Activated B cell treated with CpG ODN at 0.5 μM for 24 hours (primary cell): ENCODE measurements at regions of chr16 and their contacts with region 1.

Region 1: GRCh38 chr16:69186642-69187445 is at the start of gene SNTB2:
- DNase-seq: peak; percentile 86
- ATAC-seq: peak; percentile 81
- H3K4me3 Mint-ChIP-seq: peak within 1 kb of the TSS; percentile 98
- H3K27ac Mint-ChIP-seq: peak within 1 kb of the TSS; percentile 99
- H3K4me1 Mint-ChIP-seq: peaks cover 35% of the 10 kb centered on the region
- H3K27me3 Mint-ChIP-seq: no peaks in the 10 kb centered on the region
- CTCF ChIP-seq: no peak
- total RNA-seq, gene SNTB2: 7.7 and 9.9 TPM in 2 replicates

Region 2: GRCh38 chr16:68289621-68290329 is 897.1 kb before region 1 on chr16:
- CTCF ChIA-PET with region 1: no interaction called
- POLR2A ChIA-PET with region 1: no interaction called
- intact Hi-C with region 1: loop called (anchors 5 kb)
- DNase-seq: peak; percentile 67
- ATAC-seq: peak; percentile 89
- H3K4me3 Mint-ChIP-seq: peak overlapping the region; percentile 62
- H3K27ac Mint-ChIP-seq: peak overlapping the region; percentile 90
- H3K4me1 Mint-ChIP-seq: peaks cover 70% of the 10 kb centered on the region
- H3K27me3 Mint-ChIP-seq: no peaks in the 10 kb centered on the region
- CTCF ChIP-seq: no peak

Region 3: DNA sequence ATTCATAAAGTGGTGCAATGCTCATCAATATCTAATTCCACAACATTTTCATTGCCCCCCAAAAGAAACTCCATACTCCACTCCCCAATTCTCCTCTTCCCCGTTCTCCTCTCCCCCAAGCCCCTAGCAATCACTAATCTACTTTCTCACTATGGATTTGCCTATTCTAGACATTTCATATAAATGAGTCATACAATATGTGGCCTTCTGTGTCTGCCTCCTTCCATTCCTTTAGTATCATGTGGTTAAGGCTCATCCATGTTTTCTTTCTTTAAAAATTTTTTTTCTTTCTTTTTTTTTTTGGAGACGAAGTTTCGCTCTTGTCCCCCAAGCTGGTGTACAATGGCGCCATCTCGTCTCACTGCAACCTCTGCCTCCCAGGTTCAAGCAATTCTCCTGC is 137.7 kb before region 1 on chr16:
- CTCF ChIA-PET with region 1: no interaction called
- POLR2A ChIA-PET with region 1: no interaction called
- intact Hi-C with region 1: no loop called
- DNase-seq: no peak
- ATAC-seq: no peak
- H3K4me3 Mint-ChIP-seq: no peak overlapping the region
- H3K27ac Mint-ChIP-seq: no peak overlapping the region
- H3K4me1 Mint-ChIP-seq: no peaks in the 10 kb centered on the region
- H3K27me3 Mint-ChIP-seq: no peaks in the 10 kb centered on the region
- CTCF ChIP-seq: no peak

Region 4: GRCh38 chr16:69105489-69106361 is 81.1 kb before region 1 on chr16 and contains the start of gene HAS3:
- CTCF ChIA-PET with region 1: no interaction called
- POLR2A ChIA-PET with region 1: no interaction called
- intact Hi-C with region 1: no loop called
- DNase-seq: peak; percentile 38
- ATAC-seq: peak; percentile 71
- H3K4me3 Mint-ChIP-seq: peak within 1 kb of the TSS; percentile 86
- H3K27ac Mint-ChIP-seq: peak within 1 kb of the TSS; percentile 66
- H3K4me1 Mint-ChIP-seq: peaks cover 18% of the 10 kb centered on the region
- H3K27me3 Mint-ChIP-seq: peaks cover 34% of the 10 kb centered on the region
- CTCF ChIP-seq: no peak
- total RNA-seq, gene HAS3: 0.71 and 0.82 TPM in 2 replicates

Region 5: DNA sequence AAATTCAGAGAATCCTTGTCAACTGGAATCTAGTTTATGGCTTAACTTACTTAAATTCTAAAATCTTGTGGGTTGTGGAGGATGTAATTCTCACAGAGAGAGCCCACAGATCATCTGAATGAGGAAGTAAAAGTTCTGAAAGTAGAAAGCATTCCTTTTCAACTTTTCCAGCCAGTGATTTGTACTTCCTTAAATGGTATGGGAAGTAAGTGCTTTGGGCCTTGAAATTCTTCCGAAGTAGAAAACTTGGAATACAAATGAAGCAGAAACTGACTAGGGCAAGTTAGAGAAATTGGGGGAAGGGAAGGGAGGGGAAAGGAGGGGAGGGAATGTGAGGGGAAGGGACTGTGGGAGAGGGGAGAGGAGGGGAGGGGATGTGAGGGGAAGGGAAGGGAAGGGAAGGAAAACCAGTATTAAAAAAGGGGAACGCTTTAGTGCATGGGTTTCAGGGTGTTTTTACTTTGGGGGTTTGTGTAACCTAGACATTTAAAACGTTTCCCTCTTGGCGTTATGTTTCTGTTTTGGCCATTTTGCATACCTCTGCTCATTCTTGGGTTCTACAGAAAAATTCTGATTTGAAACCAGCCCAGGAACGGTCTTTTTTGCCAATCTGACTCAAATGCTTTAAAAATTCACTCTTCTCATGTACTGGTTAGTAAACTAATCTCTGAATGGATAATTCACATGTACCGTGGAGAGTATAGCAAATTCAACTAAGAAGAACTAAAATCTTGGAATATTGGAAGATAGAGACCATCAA is 15.3 kb before region 1 on chr16:
- CTCF ChIA-PET with region 1: no interaction called
- POLR2A ChIA-PET with region 1: interaction called, 9 read pairs
- intact Hi-C with region 1: loop called (anchors 2 kb)
- DNase-seq: no peak
- ATAC-seq: no peak
- H3K4me3 Mint-ChIP-seq: no peak overlapping the region
- H3K27ac Mint-ChIP-seq: no peak overlapping the region
- H3K4me1 Mint-ChIP-seq: peaks cover 17% of the 10 kb centered on the region
- H3K27me3 Mint-ChIP-seq: no peaks in the 10 kb centered on the region
- CTCF ChIP-seq: no peak

Region 6: GRCh38 chr16:69253870-69254341 is 67.1 kb after region 1 on chr16:
- CTCF ChIA-PET with region 1: no interaction called
- POLR2A ChIA-PET with region 1: interaction called, 14 read pairs
- intact Hi-C with region 1: no loop called
- DNase-seq: no peak
- ATAC-seq: no peak
- H3K4me3 Mint-ChIP-seq: no peak overlapping the region
- H3K27ac Mint-ChIP-seq: no peak overlapping the region
- H3K4me1 Mint-ChIP-seq: peaks cover 3% of the 10 kb centered on the region
- H3K27me3 Mint-ChIP-seq: no peaks in the 10 kb centered on the region
- CTCF ChIP-seq: no peak

Region 7: DNA sequence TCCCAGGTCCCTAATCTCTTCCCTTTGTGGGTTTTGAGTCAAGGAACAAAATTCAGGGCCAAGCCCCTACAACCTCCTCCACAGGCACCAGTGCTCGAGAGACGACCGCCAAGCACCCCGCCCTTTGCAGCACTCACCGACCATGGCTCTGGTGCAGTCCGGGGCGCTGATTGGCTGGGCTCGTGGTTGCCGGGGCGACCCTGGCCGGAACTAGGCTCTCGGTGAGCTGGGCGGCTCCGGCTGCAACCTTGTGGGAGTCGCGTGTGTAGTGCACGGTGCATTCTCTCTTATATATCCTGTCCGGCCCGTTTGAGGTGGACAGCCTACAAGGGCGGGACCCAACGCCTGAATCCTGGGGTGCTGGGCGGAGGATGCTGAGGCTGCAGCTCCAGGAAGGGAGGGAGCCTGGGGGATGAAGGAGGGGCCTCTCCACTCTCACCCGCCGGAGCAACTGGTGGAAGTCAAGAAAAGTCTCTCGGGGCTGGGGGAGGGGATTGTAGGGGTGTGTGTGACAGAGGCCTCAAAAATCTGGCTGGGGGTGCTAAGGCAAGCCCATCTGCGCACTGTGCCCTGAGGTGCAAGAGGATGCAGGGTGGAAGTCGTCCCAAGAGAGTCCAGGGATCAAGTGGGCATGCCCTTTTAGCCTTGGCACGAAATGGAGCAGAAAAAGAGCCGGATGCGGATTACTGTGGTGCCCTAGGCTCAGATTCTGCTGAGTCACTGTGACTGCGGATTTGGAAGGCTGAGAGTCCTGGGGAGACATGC is 539.6 kb after region 1 on chr16 and contains the start of gene NQO1:
- CTCF ChIA-PET with region 1: no interaction called
- POLR2A ChIA-PET with region 1: no interaction called
- intact Hi-C with region 1: loop called (anchors 10 kb)
- DNase-seq: peak; percentile 81
- ATAC-seq: peak; percentile 99
- H3K4me3 Mint-ChIP-seq: peak within 1 kb of the TSS; percentile 95
- H3K27ac Mint-ChIP-seq: peak within 1 kb of the TSS; percentile 94
- H3K4me1 Mint-ChIP-seq: peaks cover 29% of the 10 kb centered on the region
- H3K27me3 Mint-ChIP-seq: no peaks in the 10 kb centered on the region
- CTCF ChIP-seq: no peak
- total RNA-seq, gene NQO1: 5.4 and 5.5 TPM in 2 replicates